Activated T-helper 2 cell treated with anti-CD3 and anti-CD28 coated beads, Interferon-gamma antibody, Interleukin-2, Interleukin-4, amounts not matched to agents 10 μg/mL and 5 μg/mL and 100 μg/mL, durations not matched to agents 14 hours and 24 hours and 36 hours (primary cell): ENCODE measurements at regions of chr10 and their contacts with region 1.

Region 1: GRCh38 chr10:77846718-77847630 is 79.6 kb downstream of the DLG5 start:
- DNase-seq: peak; percentile 45
- H3K4me3 Mint-ChIP-seq: no peak overlapping the region
- H3K27ac Mint-ChIP-seq: no peak overlapping the region
- H3K4me1 Mint-ChIP-seq: peaks cover 6% of the 10 kb centered on the region
- H3K27me3 Mint-ChIP-seq: no peaks in the 10 kb centered on the region

Region 2: GRCh38 chr10:77970869-77971803 is 124.2 kb after region 1 on chr10:
- intact Hi-C with region 1: loop called (anchors 5 kb)
- DNase-seq: no peak
- H3K4me3 Mint-ChIP-seq: peak overlapping the region; percentile 0
- H3K27ac Mint-ChIP-seq: peak overlapping the region; percentile 71
- H3K4me1 Mint-ChIP-seq: peaks cover 8% of the 10 kb centered on the region
- H3K27me3 Mint-ChIP-seq: no peaks in the 10 kb centered on the region